CD4-positive, alpha-beta memory T cell (primary cell): ENCODE measurements at regions of chr11 and their contacts with region 1.

Region 1: DNA sequence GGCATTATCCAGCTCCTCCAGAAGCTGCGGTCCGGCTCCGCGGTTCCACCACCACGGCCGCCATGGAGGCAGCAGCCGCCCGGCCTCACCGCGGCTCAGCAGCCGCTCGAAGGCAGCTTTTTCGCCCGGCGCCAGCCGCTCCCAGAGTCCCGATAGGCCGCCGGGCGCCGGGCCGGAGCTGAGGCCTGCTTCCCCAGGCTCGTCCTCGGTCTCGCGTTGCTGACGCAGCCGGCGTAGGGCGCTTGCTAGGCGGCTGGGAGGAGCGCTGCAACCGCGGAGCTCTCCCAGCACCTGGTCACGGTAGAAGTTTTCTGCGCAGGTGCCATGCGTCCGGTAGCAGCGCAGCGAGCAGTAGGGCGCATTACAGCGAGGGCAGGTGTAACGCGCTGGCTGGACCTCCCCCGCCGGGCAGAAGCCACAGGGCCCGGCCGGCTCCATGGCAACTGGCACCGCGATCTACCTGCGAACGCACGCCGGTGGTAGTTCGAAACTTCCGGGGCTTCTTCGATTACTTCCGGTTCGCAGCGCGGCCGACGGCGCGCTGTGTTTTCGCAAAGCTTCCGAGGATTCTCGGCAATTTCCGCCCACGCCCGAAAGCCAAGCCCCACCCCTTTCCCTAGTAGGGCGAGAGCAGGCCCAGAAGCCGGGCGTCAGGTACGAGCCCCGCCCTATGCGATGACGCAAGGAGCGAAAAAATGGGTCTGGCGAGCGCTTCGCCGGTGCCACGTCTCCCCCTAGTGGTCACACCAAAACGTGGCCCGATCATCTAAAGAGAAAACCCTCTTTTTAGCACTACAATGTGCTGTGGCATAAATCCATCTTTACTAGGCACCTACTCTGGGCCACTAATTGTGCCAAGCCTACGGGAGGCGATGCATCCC is at the start of gene ZNHIT2:
- DNase-seq: peak; percentile 100
- H3K4me3 ChIP-seq: peak within 1 kb of the TSS; percentile 69 to 82
- H3K4me3 Mint-ChIP-seq: peak within 1 kb of the TSS; percentile 88 to 94 (median 92)
- H3K27ac ChIP-seq: peak within 1 kb of the TSS; percentile 91
- H3K27ac Mint-ChIP-seq: peak within 1 kb of the TSS; percentile 95 to 99 (median 97)
- H3K4me1 ChIP-seq: peaks cover 40% of the 10 kb centered on the region
- H3K4me1 Mint-ChIP-seq: peaks cover 17 to 69% (median 42%) of the 10 kb centered on the region in 4 donors
- H3K27me3 ChIP-seq: no peaks in the 10 kb centered on the region
- H3K27me3 Mint-ChIP-seq: no peaks in the 10 kb centered on the region
- total RNA-seq, gene ZNHIT2: 15.9 to 16.5 TPM

Region 2: GRCh38 chr11:64742889-64743590 is 374.4 kb before region 1 on chr11:
- CTCF ChIA-PET with region 1: interaction called, 3 read pairs
- POLR2A ChIA-PET with region 1: interaction called, 9 read pairs
- intact Hi-C with region 1: loop called (anchors 10 kb)
- DNase-seq: peak; percentile 65 to 83 (median 74)
- H3K4me3 ChIP-seq: peak overlapping the region; percentile 95 to 98
- H3K4me3 Mint-ChIP-seq: peak overlapping the region; percentile 17 to 99 (median 97)
- H3K27ac ChIP-seq: peak overlapping the region; percentile 81
- H3K27ac Mint-ChIP-seq: peak overlapping the region in 1 of 7 donors; percentile 96
- H3K4me1 ChIP-seq: peaks cover 38% of the 10 kb centered on the region
- H3K4me1 Mint-ChIP-seq: peaks cover 21 to 62% (median 35%) of the 10 kb centered on the region in 4 donors
- H3K27me3 ChIP-seq: no peaks in the 10 kb centered on the region
- H3K27me3 Mint-ChIP-seq: no peaks in the 10 kb centered on the region

Region 3: GRCh38 chr11:64916775-64917662 is 200.4 kb before region 1 on chr11 and contains the start of gene ATG2A:
- CTCF ChIA-PET with region 1: no interaction called
- POLR2A ChIA-PET with region 1: interaction called, 5 read pairs
- intact Hi-C with region 1: loop called (anchors 1 kb)
- DNase-seq: peak; percentile 98 to 99 (median 99)
- H3K4me3 ChIP-seq: peak within 1 kb of the TSS; percentile 94 to 97
- H3K4me3 Mint-ChIP-seq: peak within 1 kb of the TSS; percentile 91 to 96 (median 93)
- H3K27ac ChIP-seq: peak within 1 kb of the TSS; percentile 88
- H3K27ac Mint-ChIP-seq: peak within 1 kb of the TSS; percentile 93 to 97 (median 96)
- H3K4me1 ChIP-seq: peaks cover 27% of the 10 kb centered on the region
- H3K4me1 Mint-ChIP-seq: peaks cover 15 to 28% (median 23%) of the 10 kb centered on the region in 4 donors
- H3K27me3 ChIP-seq: no peaks in the 10 kb centered on the region
- H3K27me3 Mint-ChIP-seq: no peaks in the 10 kb centered on the region
- total RNA-seq, gene ATG2A: 45.7 to 47.3 TPM

Region 4: DNA sequence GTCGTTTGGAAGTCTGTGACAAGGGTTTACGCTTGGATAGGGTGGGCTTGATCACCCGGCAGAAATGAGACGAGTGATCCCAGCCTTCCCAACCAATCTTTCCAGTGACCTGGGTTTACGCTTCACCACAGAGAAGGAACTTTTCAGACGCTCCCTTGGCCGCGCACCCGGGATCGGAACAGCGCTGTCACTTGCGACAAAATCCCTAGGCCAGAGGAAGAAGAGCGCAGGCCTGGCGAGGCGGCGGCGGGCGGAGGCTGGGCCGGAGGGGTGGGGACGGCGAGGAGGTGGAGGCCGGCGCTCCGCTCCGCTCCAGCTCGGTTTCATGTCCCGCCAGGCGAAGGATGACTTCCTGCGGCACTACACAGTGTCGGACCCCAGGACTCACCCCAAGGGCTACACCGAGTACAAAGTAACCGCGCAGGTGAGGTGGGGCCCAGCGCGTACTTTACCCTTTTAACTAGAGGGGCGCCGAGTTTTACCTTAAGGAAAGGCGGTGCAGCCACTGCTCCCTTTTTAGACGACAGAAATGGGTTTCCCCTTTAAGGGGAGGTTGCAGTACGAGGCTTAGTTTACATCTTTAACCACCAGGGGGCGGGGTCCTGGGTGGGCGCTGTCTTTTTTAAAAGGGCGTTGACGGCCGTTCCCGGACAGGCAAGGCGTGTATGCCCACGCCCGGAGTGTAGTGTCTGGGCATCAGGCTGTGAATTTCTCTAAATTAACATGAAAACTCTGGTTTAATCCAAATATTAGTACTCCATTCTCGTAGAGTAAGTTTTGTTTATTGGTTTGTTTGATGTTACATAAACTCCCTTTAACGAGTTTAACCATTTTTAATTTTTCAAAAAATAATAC is 90.0 kb before region 1 on chr11 and contains the start of gene SNX15:
- CTCF ChIA-PET with region 1: interaction called, 3 read pairs
- POLR2A ChIA-PET with region 1: interaction called, 8 read pairs
- intact Hi-C with region 1: loop called (anchors 1 kb)
- DNase-seq: peak; percentile 94 to 96 (median 95)
- H3K4me3 ChIP-seq: peak within 1 kb of the TSS in 1 of 2 donors; percentile 52
- H3K4me3 Mint-ChIP-seq: peak within 1 kb of the TSS; percentile 69 to 88 (median 81)
- H3K27ac ChIP-seq: peak within 1 kb of the TSS; percentile 61
- H3K27ac Mint-ChIP-seq: peak within 1 kb of the TSS; percentile 88 to 96 (median 91)
- H3K4me1 ChIP-seq: peaks cover 19% of the 10 kb centered on the region
- H3K4me1 Mint-ChIP-seq: peaks cover 9 to 30% (median 17%) of the 10 kb centered on the region in 4 donors
- H3K27me3 ChIP-seq: no peaks in the 10 kb centered on the region
- H3K27me3 Mint-ChIP-seq: no peaks in the 10 kb centered on the region
- total RNA-seq, gene SNX15: 24.5 to 26.7 TPM

Region 5: GRCh38 chr11:65095974-65096806 is 21.3 kb before region 1 on chr11 and contains the start of gene VPS51:
- CTCF ChIA-PET with region 1: interaction called, 70 read pairs
- POLR2A ChIA-PET with region 1: interaction called, 320 read pairs
- intact Hi-C with region 1: loop called (anchors 1 kb)
- DNase-seq: peak; percentile 87 to 92 (median 89)
- H3K4me3 ChIP-seq: peak within 1 kb of the TSS; percentile 47 to 74
- H3K4me3 Mint-ChIP-seq: peak within 1 kb of the TSS; percentile 86 to 95 (median 93)
- H3K27ac ChIP-seq: peak within 1 kb of the TSS; percentile 78
- H3K27ac Mint-ChIP-seq: peak within 1 kb of the TSS; percentile 95 to 97 (median 96)
- H3K4me1 ChIP-seq: peaks cover 18% of the 10 kb centered on the region
- H3K4me1 Mint-ChIP-seq: peaks cover 8 to 26% (median 17%) of the 10 kb centered on the region in 4 donors
- H3K27me3 ChIP-seq: no peaks in the 10 kb centered on the region
- H3K27me3 Mint-ChIP-seq: no peaks in the 10 kb centered on the region
- total RNA-seq, gene VPS51: 221 to 226 TPM

Region 6: GRCh38 chr11:65180877-65181568 is 63.6 kb after region 1 on chr11:
- CTCF ChIA-PET with region 1: interaction called, 33 read pairs
- POLR2A ChIA-PET with region 1: interaction called, 32 read pairs
- intact Hi-C with region 1: no loop called
- DNase-seq: peak; percentile 48 to 70 (median 54)
- H3K4me3 ChIP-seq: peak overlapping the region; percentile 61 to 70
- H3K4me3 Mint-ChIP-seq: peak overlapping the region; percentile 89 to 93 (median 90)
- H3K27ac ChIP-seq: peak overlapping the region; percentile 52
- H3K27ac Mint-ChIP-seq: peak overlapping the region in 6 of 7 donors; percentile 79 to 94 (median 87)
- H3K4me1 ChIP-seq: peaks cover 36% of the 10 kb centered on the region
- H3K4me1 Mint-ChIP-seq: peaks cover 11 to 37% (median 22%) of the 10 kb centered on the region in 4 donors
- H3K27me3 ChIP-seq: no peaks in the 10 kb centered on the region
- H3K27me3 Mint-ChIP-seq: no peaks in the 10 kb centered on the region